Activated CD4-positive, alpha-beta memory T cell treated with anti-CD3 and anti-CD28 coated beads for 36 hours (primary cell): ENCODE measurements at regions of chr5 and their contacts with region 1.

Region 1: DNA sequence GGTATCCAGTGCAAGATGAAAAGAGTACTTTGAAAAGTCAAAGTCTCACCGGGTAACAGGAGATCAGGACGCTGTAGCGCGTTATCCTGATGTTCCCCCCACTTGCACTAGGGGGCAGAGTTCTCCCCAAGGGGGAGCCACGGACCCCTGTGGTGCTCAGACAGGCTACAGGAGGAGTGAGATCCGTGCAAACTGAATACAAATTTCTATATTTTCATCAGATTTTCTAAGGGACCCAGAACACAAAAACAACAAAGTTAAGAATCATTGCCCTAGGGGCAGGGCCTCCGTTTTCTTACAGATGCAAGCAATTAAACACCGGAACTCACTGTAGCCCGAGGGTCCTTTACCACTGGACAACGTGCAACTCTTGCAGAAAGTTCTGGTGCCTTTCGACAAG is 2.0 kb downstream of the MYO10 start:
- DNase-seq: peak; percentile 53
- H3K4me3 Mint-ChIP-seq: no peak overlapping the region
- H3K27ac Mint-ChIP-seq: no peak overlapping the region
- H3K4me1 Mint-ChIP-seq: peaks cover 17% of the 10 kb centered on the region
- H3K27me3 Mint-ChIP-seq: peaks cover 57% of the 10 kb centered on the region

Region 2: DNA sequence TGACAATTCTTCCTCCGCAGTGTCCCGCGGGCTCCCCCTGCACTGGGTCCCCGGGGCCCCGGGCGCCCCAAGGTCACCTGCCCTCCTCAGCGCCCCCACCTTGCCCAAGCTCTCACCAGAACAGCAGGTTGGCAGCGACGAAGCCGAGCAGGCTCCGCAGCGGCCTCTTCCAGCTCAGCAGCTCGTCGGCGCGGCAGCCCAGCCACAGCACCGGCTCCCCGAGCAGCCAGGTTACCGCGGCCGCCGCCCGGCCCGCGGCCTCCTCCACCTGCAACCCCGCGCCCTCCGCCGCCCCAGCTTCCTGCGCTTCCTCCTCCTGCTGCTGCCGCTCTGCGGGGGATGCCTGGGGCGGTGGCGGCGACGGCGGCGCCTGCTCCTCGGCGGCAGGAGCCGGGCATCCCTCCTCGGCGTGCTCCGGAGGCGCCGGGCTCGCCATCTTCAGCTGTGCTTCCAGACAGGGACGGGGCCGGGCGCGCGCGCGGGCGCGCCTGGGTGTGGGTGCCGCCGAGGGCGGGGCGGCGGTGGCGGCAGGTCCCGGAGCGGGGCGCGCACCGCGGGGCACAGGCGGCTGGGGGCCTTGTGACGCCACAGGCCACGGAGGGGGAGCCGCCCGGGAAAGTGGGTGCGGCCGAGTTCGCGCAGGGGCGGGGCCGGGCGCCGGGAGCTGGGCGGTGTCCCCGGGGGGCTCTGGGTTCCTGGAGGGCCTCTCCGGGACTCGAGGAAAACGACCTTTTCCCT is 317.4 kb before region 1 on chr5 and contains the start of gene RETREG1:
- CTCF ChIA-PET with region 1: no interaction called
- POLR2A ChIA-PET with region 1: no interaction called
- intact Hi-C with region 1: loop called (anchors 5 kb)
- DNase-seq: peak; percentile 81
- H3K4me3 Mint-ChIP-seq: peak within 1 kb of the TSS; percentile 95
- H3K27ac Mint-ChIP-seq: peak within 1 kb of the TSS; percentile 83
- H3K4me1 Mint-ChIP-seq: peaks cover 33% of the 10 kb centered on the region
- H3K27me3 Mint-ChIP-seq: no peaks in the 10 kb centered on the region
- total RNA-seq, gene RETREG1: 8.1 to 10.1 TPM

Region 3: GRCh38 chr5:17132444-17133083 is 198.4 kb after region 1 on chr5:
- CTCF ChIA-PET with region 1: no interaction called
- POLR2A ChIA-PET with region 1: no interaction called
- intact Hi-C with region 1: loop called (anchors 1 kb)
- DNase-seq: no peak
- H3K4me3 Mint-ChIP-seq: no peak overlapping the region
- H3K27ac Mint-ChIP-seq: no peak overlapping the region
- H3K4me1 Mint-ChIP-seq: peaks cover 6% of the 10 kb centered on the region
- H3K27me3 Mint-ChIP-seq: peaks cover 13% of the 10 kb centered on the region

Region 4: DNA sequence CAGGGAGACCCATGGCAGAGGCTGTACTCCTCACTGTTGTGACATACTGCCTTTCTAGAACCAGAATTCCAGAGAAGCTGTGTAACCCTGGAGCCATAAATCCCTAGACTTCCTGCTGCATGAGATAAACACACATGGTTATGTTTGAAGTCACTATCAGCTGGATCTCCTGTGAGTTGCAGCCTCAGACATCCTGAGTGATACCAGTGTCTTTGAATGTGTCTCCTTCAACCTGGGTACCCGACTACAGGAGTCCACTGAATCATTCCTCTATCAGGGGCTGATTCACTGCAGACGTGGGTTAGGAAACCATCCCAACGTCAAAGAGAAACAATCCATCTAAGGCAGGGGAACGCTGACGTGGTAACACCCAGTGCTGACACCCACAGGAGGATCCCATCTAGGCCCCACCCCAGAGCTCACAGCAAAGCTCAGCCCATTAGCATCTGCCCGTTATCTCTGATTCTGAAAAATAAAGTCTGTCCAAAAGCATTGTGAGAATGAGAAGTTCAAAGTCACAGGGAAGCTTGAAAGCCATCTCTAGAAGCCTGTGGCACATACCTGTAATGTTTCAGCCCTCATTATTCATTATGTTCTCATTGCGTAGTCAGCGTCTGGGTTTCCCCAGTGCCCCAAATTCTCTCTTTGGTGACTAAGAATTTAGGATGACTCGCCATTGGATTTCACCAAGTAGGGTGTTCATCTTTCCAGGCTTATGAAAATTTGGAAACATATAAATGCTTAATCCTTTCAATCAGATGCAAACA is 247.0 kb after region 1 on chr5:
- CTCF ChIA-PET with region 1: no interaction called
- POLR2A ChIA-PET with region 1: interaction called, 3 read pairs
- intact Hi-C with region 1: loop called (anchors 2 kb)
- DNase-seq: peak; percentile 31
- H3K4me3 Mint-ChIP-seq: no peak overlapping the region
- H3K27ac Mint-ChIP-seq: peak overlapping the region; percentile 44
- H3K4me1 Mint-ChIP-seq: peaks cover 2% of the 10 kb centered on the region
- H3K27me3 Mint-ChIP-seq: peaks cover 3% of the 10 kb centered on the region

Region 5: DNA sequence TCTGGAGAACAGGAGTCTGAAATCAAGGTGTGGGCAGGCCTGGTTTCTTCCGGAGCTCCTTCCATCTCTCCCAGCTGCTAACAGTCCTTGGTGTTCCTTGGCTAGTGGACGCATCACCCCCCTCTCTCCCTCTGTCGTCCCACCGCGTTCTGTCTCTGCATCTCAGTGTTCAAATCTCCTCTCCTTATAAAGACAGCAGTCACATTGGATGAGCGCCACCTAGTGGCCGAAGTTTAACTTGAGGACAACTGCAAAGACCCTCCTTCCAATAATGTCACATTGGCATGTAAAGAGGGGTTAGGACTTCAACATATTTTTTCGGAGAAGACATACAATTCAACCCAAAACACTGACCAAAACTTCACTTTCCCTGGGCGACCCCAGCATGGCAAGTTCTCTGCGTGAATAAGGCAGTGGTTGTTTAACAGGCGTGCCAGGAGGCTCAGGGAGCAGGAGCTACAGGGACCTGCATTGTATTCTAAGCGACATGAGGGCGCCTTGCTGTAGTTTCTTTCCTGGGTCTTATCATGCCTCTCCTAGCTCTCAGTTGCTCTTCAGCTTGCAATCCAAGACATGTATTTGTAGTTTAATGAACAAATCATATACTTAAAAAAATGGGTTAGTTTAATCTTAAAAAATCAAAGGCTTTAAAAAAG is 255.4 kb after region 1 on chr5:
- CTCF ChIA-PET with region 1: interaction called, 3 read pairs
- POLR2A ChIA-PET with region 1: no interaction called
- intact Hi-C with region 1: loop called (anchors 1 kb)
- DNase-seq: peak; percentile 64
- H3K4me3 Mint-ChIP-seq: no peak overlapping the region
- H3K27ac Mint-ChIP-seq: no peak overlapping the region
- H3K4me1 Mint-ChIP-seq: peaks cover 2% of the 10 kb centered on the region
- H3K27me3 Mint-ChIP-seq: peaks cover 3% of the 10 kb centered on the region